ENCODE measurements at regions of chr13 and their contacts with region 1.

Region 1: GRCh38 chr13:74133657-74134201 is 475 bp downstream of the KLF12 start:
- DNase-seq: peak; percentile 68 to 93
- H3K4me3 ChIP-seq: peak overlapping the region; percentile 92 to 97
- H3K27ac ChIP-seq: peak overlapping the region; percentile 96 to 98
- H3K4me1 ChIP-seq: peaks cover under 1 to 25% of the 10 kb centered on the region in 2 donors
- H3K27me3 ChIP-seq: no peaks in the 10 kb centered on the region
- CTCF ChIP-seq: no peak

Region 2: DNA sequence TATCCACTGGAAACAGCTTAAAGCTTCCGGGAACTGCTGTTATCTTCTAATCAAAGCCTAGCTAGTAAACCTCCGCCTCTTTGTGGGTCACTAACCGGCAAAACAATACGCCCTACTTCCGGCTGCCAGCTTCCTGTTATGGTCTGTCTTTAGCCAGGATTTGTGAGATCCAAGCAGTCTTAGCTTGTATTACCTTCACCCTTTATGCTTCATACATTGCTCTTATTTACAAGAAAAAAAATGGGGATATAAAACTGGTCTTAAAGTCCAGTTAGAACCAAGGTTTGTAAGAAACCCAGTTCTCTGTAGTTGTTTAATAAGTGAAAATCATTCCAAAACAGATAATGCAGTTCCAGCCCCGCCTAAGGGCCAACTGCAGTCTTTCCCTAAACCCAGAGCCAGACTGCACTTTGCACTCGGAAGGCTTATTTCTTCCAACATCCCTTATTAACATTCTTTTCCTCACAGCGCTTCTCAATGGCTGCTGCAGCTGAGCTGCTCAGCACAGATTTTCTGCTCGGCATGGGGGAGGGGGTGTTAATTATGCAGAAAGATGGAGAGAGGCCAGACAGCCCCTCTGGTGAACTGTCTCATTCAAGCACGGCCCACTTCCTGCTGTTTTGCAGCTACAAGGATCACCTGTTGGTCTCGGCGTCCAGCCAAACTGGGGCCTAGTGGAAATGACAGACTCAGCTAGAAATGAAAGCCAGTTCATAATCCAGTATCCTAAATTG is 367.9 kb before region 1 on chr13:
- intact Hi-C with region 1: loop called (anchors 10 kb)
- DNase-seq: peak; percentile 33 to 75
- H3K4me3 ChIP-seq: peak overlapping the region in 1 of 2 donors; percentile 32
- H3K27ac ChIP-seq: peak overlapping the region; percentile 67 to 86
- H3K4me1 ChIP-seq: peaks cover 3 to 27% of the 10 kb centered on the region in 2 donors
- H3K27me3 ChIP-seq: no peaks in the 10 kb centered on the region
- CTCF ChIP-seq: no peak

Region 3: DNA sequence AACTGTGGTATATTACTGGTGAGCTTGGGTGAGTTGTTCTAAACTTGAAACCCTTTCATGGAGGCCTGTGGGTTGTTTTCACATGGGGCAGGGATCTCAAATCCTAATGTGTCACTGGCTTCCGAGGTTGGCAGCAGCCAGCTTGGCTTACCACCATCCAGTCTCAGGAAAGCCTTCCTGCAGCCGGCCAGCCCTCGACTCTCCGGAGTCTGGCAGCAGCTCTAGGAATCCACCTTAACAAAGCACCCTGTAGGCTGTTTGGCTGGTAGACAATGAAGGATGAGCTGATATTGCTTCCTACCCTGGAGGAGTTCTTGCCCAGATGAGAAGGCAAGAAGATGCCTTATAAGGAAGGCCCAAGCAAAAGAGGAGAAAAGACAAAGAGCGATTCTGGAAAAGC is 187.9 kb before region 1 on chr13:
- intact Hi-C with region 1: loop called (anchors 5 kb)
- DNase-seq: peak in 1 of 2 donors; percentile 64
- H3K4me3 ChIP-seq: no peak overlapping the region
- H3K27ac ChIP-seq: no peak overlapping the region
- H3K4me1 ChIP-seq: no peaks in the 10 kb centered on the region
- H3K27me3 ChIP-seq: no peaks in the 10 kb centered on the region
- CTCF ChIP-seq: no peak

Region 4: GRCh38 chr13:74036373-74036772 is 97.4 kb before region 1 on chr13:
- intact Hi-C with region 1: no loop called
- DNase-seq: no peak
- H3K4me3 ChIP-seq: no peak overlapping the region
- H3K27ac ChIP-seq: no peak overlapping the region
- H3K4me1 ChIP-seq: peaks cover 0 to 4% of the 10 kb centered on the region in 2 donors
- H3K27me3 ChIP-seq: no peaks in the 10 kb centered on the region
- CTCF ChIP-seq: no peak

Region 5: DNA sequence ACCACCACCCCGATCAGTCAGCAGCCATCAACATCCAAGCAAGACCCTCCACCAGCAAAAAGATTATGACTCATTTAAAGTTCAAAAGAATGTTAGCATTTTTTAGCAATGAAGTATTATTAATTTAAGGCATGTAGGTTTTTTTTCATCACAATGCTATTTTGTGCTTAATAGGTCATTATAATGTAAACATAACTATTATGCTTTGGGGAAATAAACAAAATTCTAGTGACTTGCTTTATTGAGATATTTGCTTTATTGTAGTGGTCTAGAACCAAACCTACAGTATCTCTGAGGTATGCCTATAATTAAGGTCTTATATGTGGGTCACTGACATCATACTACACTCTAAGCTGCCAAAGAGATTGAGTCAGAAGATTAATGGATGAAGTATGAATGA is 19.5 kb before region 1 on chr13:
- intact Hi-C with region 1: loop called (anchors 1 kb)
- DNase-seq: no peak
- H3K4me3 ChIP-seq: no peak overlapping the region
- H3K27ac ChIP-seq: peak overlapping the region; percentile 48 to 74
- H3K4me1 ChIP-seq: peaks cover 0 to 34% of the 10 kb centered on the region in 2 donors
- H3K27me3 ChIP-seq: no peaks in the 10 kb centered on the region
- CTCF ChIP-seq: no peak

Region 6: GRCh38 chr13:74200081-74200480 is 66.4 kb after region 1 on chr13:
- intact Hi-C with region 1: no loop called
- DNase-seq: no peak
- H3K4me3 ChIP-seq: no peak overlapping the region
- H3K27ac ChIP-seq: no peak overlapping the region
- H3K4me1 ChIP-seq: peaks cover 0 to 3% of the 10 kb centered on the region in 2 donors
- H3K27me3 ChIP-seq: no peaks in the 10 kb centered on the region
- CTCF ChIP-seq: no peak

Region 7: GRCh38 chr13:74287724-74288169 is 154.0 kb after region 1 on chr13:
- intact Hi-C with region 1: loop called (anchors 1 kb)
- DNase-seq: peak; percentile 47 to 85
- H3K4me3 ChIP-seq: peak overlapping the region; percentile 18 to 53
- H3K27ac ChIP-seq: peak overlapping the region in 1 of 2 donors; percentile 2
- H3K4me1 ChIP-seq: peaks cover 4 to 8% of the 10 kb centered on the region in 2 donors
- H3K27me3 ChIP-seq: no peaks in the 10 kb centered on the region
- CTCF ChIP-seq: no peak